PC-9 (cell line): ENCODE measurements at regions of chr17 and their contacts with region 1.

Region 1: GRCh38 chr17:38958756-38959155 is 8.4 kb downstream of the FBXO47 start:
- DNase-seq: peak; percentile 15 to 38
- H3K4me3 ChIP-seq: no peak overlapping the region
- H3K27ac ChIP-seq: peak overlapping the region; percentile 28; the same call in 1 of the 2 replicates
- H3K4me1 ChIP-seq: peaks cover 13% of the 10 kb centered on the region
- H3K27me3 ChIP-seq: no peaks in the 10 kb centered on the region
- CTCF ChIP-seq: no peak

Region 2: DNA sequence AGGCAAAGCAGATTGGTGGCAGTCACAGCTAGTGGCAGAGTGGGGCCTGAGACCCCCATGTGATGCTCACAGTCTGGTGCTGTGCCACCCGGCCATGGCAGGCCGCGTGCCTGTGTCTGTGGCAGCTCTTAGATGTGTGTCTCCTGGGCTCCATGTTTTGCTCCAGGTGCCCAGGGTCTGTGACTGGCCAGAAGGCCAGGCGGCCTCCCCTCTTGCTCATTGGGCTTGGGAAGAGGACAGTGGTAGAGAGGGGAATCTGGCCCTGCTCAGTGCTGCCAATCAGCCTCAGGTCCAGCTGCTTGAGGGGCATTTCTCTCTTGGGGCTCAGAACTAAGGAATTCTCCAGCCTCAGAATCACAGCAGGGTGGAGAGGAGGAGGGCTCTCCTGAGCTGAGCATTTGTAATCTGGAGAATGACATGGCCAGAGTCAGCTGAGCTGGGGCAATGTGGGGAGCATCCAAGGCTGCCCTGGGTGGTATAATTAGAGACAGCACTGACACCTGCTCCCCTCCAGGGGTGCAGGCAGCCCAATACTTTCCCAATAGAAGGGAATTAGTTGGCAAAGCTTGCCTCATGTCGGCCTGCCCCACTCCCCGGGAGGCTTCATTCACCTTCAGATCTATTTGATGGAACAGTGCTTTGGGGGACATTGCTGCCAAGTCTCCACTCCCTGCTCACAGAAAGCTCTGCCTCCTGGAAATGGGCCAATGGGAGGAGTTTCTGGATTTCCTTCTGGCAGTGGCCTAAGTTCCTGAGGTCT is 36.0 kb before region 1 on chr17:
- CTCF ChIA-PET with region 1: interaction called, 3 read pairs
- POLR2A ChIA-PET with region 1: no interaction called
- intact Hi-C with region 1: loop called (anchors 5 kb)
- DNase-seq: peak in 1 of 2 experiments; percentile 38
- H3K4me3 ChIP-seq: no peak overlapping the region
- H3K27ac ChIP-seq: peak overlapping the region; percentile 18; the same call in 1 of the 2 replicates
- H3K4me1 ChIP-seq: no peaks in the 10 kb centered on the region
- H3K27me3 ChIP-seq: no peaks in the 10 kb centered on the region
- CTCF ChIP-seq: no peak

Region 3: GRCh38 chr17:39235555-39236449 is 277.0 kb after region 1 on chr17:
- CTCF ChIA-PET with region 1: interaction called, 10 read pairs
- POLR2A ChIA-PET with region 1: no interaction called
- intact Hi-C with region 1: no loop called
- DNase-seq: no peak
- H3K4me3 ChIP-seq: no peak overlapping the region
- H3K27ac ChIP-seq: no peak overlapping the region
- H3K4me1 ChIP-seq: peaks cover 13% of the 10 kb centered on the region
- H3K27me3 ChIP-seq: no peaks in the 10 kb centered on the region
- CTCF ChIP-seq: peak; percentile 83